Dendritic cell treated with granulocyte-macrophage colony-stimulating factor and Interleukin-4, amounts not matched to agents 40 ng/mL and 50 ng/mL, for 4 days (primary cell): ENCODE measurements at regions of chr6 and their contacts with region 1.

Region 1: GRCh38 chr6:5723841-5724691 is 282.7 kb downstream of the NRN1 start:
- H3K4me3 Mint-ChIP-seq: peak overlapping the region; percentile 71
- H3K27ac Mint-ChIP-seq: peak overlapping the region; percentile 98
- H3K4me1 Mint-ChIP-seq: peaks cover 47% of the 10 kb centered on the region
- H3K27me3 Mint-ChIP-seq: no peaks in the 10 kb centered on the region

Region 2: DNA sequence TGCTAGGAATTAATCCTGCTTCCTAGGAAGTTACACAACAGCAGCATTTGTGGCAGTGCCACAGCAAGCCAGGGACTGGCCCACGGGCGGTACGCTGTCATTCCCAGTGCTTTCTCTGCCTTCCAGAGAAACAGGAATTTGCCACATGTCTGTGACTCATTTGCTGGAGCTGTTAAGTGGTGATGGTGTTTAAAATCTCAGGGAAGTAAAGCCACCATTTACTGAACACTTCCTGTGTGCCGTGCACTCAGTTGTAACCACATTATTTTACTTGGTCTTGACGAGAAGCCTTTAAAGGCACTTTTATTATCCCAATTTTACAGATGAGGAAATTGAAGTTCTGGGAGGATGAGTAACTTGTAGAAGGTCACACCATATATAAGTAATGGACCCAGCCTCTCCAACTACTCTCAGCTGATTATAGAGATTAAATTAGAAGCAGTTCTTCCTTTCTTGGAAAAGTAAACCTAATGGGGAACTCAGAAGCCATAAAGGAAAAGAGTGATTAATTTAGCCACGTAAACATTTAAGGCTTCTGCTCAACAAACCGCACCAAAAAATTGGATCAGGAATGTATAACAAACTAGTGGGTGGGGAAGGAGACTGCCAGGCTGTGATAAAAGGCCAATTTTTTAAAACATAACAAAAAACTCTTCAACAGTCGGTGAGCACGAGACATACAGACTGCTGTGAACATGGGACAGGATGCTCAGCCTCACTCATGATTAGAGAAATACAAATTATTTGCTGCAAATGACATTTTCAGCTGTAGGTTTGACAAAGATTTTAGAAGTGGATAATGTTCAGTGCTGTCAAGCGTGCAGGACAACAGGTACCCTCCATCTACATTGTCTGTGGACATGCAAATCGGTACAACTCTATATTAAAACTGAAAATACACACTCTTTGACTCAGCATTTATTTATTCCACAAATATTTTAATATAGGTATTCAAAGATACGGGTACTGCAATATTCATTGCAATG is 28.5 kb before region 1 on chr6:
- intact Hi-C with region 1: loop called (anchors 1 kb)
- H3K4me3 Mint-ChIP-seq: peak overlapping the region; percentile 6
- H3K27ac Mint-ChIP-seq: peak overlapping the region; percentile 83
- H3K4me1 Mint-ChIP-seq: peaks cover 39% of the 10 kb centered on the region
- H3K27me3 Mint-ChIP-seq: no peaks in the 10 kb centered on the region